MCF 10A (cell line): ENCODE measurements at regions of chr12 and their contacts with region 1.

Region 1: GRCh38 chr12:1690578-1691122 is at the start of gene ADIPOR2:
- DNase-seq: peak; percentile 97
- H3K4me3 Mint-ChIP-seq: peak within 1 kb of the TSS; percentile 80
- H3K27ac Mint-ChIP-seq: peak within 1 kb of the TSS; percentile 98
- H3K4me1 Mint-ChIP-seq: peaks cover 8% of the 10 kb centered on the region
- H3K27me3 Mint-ChIP-seq: no peaks in the 10 kb centered on the region
- CTCF ChIP-seq: no peak
- total RNA-seq, gene ADIPOR2: 50.4 and 58.5 TPM in 2 replicates

Region 2: DNA sequence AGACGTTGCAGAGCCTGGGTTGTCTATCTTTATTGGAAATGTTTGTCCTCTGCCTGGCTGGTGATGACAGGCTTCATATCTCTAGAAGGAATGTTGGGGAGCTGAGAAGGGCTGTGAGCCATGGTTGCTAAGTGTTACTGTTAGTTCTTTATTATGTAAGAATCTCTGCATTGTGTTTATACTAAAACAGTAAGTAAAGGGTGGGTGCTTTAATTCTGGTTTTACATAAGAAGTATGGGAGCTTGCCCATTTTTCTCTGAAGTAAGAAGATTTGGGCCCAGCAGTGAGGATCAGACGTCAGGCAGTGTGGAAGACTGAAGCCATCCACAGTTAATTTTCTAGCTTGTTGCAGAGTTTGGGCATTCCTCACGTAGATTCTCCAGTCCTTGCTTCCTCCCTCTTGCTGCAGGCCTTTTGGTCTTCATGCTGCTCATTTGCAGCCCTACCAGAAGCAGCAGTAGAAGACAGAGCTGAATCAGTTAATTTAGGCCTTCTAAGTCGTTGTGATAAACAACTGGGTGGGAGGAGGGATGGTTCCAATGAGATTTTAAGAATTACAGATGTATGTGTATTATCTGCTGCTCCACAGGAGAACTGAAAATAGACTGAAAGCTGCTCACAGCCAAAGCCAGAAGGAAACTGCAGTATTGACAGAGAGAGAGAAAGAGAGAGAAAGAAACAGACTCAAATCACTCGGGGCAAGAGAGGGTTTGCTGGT is 40.2 kb before region 1 on chr12:
- CTCF ChIA-PET with region 1: interaction called, 5 read pairs
- POLR2A ChIA-PET with region 1: interaction called, 8 read pairs
- intact Hi-C with region 1: loop called (anchors 2 kb)
- DNase-seq: no peak
- H3K4me3 Mint-ChIP-seq: no peak overlapping the region
- H3K27ac Mint-ChIP-seq: no peak overlapping the region
- H3K4me1 Mint-ChIP-seq: peaks cover 2% of the 10 kb centered on the region
- H3K27me3 Mint-ChIP-seq: peaks cover 10% of the 10 kb centered on the region
- CTCF ChIP-seq: no peak

Region 3: DNA sequence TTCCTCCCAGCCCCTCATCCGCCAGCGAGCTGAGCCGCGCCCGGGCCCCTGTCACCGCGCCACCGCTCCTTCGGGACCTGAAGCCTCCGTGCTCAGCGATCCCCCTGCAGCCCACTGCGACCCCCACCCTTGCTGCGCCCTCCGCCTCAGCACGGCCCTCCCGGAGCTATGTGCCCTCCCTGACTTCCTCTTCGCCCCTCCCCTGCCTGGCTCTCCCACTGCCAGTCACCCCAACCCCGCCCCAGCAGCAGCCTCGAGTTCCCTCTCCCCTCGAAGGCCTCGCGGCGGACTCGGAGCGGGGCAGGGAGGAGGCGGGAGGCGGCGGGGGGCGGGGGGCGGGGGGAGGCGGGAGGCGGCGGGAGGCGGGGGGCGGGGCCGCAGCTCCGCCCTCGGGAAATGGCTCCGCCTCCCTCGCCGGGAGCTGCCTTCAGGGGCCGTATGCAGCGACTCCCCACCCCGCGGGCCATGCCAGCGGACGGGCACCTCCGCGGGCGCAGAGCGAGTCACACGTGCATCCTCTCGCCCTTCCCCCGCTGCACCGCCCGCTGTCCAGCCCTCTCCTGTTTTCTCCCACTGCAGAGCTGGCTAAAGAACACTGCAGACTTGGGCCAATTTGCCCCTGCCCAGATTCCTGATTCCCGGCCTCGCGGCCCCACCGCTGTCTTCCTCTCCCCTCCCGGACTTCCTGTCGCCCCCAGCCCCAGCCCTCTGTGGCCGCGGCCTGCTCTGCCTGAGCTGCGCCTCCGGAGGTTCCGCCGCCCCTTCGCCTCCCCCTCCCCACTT is 28.9 kb before region 1 on chr12:
- CTCF ChIA-PET with region 1: interaction called, 4 read pairs
- POLR2A ChIA-PET with region 1: interaction called, 53 read pairs
- intact Hi-C with region 1: no loop called
- DNase-seq: peak; percentile 90
- H3K4me3 Mint-ChIP-seq: peak overlapping the region; percentile 70
- H3K27ac Mint-ChIP-seq: peak overlapping the region; percentile 42
- H3K4me1 Mint-ChIP-seq: peaks cover 9% of the 10 kb centered on the region
- H3K27me3 Mint-ChIP-seq: no peaks in the 10 kb centered on the region
- CTCF ChIP-seq: no peak

Region 4: DNA sequence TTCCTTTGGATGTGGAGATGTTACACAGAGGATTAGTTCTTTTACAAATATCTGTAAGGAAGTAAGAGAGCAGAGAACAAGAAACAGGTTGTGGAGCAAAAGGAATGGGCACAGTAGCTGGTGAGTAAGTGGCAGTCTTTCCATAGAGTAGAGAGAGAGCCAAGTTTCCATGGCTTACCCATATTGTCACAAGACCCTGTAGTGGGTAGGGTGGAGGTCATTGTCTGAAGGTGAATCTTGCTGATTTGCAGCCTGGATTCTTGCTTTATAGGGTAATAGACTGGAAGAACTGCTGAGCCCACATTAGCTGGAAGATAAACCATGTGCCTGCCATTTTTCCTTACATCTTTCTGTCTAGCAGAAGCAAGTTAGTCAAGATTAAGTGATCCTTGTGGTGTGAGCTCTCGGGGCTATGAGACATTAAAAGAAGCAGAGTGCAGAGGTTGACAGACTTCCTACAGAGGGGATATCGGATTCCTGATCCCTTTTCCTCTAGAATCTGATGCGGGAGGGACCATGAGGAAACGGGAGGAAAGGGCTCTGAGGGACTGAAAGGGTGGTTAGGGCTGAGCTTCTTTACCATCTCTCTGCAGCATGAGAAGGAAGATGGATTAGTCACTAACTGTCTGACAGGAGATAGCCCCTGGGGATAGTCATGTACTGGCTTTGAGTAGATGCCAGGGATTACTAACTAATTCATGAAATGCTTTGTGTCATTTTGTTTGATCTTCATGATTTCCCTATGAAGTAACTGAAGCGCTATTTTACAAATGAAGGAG is 85.7 kb after region 1 on chr12:
- CTCF ChIA-PET with region 1: interaction called, 4 read pairs
- POLR2A ChIA-PET with region 1: interaction called, 6 read pairs
- intact Hi-C with region 1: loop called (anchors 2 kb)
- DNase-seq: peak; percentile 89
- H3K4me3 Mint-ChIP-seq: peak overlapping the region; percentile 0
- H3K27ac Mint-ChIP-seq: peak overlapping the region; percentile 11
- H3K4me1 Mint-ChIP-seq: peaks cover 49% of the 10 kb centered on the region
- H3K27me3 Mint-ChIP-seq: no peaks in the 10 kb centered on the region
- CTCF ChIP-seq: no peak

Region 5: DNA sequence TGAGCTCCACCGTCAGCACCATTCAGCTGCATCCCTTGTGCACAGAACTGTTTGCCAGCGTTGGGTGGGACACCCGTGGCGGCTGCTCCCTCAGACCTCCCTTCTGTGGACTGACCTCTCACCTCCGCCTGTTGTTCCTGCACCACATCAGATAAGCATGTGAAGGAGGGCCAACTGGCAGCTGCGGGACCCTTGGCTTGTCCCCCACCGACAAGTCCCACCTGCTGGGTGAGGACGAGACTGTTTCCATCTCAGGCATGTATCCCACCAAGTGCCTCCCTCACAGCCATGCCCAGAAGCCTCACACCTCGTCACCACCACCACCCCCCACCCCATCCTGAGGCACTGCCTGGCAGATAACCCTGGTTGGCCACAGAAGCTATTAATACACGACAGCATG is 1249.9 kb after region 1 on chr12:
- CTCF ChIA-PET with region 1: no interaction called
- POLR2A ChIA-PET with region 1: no interaction called
- intact Hi-C with region 1: no loop called
- DNase-seq: no peak
- H3K4me3 Mint-ChIP-seq: no peak overlapping the region
- H3K27ac Mint-ChIP-seq: no peak overlapping the region
- H3K4me1 Mint-ChIP-seq: no peaks in the 10 kb centered on the region
- H3K27me3 Mint-ChIP-seq: no peaks in the 10 kb centered on the region
- CTCF ChIP-seq: no peak